Activated T-helper 1 cell treated with anti-CD3 and anti-CD28 coated beads, Interleukin-12 subunit alpha, Interleukin-12 subunit beta, Interleukin-2, Interleukin-4 antibody, amounts not matched to agents 30 ng/mL and 10 ng/mL and 1 ng/mL, durations not matched to agents 14 hours and 24 hours and 36 hours (primary cell): ENCODE measurements at regions of chr1 and their contacts with region 1.

Region 1: DNA sequence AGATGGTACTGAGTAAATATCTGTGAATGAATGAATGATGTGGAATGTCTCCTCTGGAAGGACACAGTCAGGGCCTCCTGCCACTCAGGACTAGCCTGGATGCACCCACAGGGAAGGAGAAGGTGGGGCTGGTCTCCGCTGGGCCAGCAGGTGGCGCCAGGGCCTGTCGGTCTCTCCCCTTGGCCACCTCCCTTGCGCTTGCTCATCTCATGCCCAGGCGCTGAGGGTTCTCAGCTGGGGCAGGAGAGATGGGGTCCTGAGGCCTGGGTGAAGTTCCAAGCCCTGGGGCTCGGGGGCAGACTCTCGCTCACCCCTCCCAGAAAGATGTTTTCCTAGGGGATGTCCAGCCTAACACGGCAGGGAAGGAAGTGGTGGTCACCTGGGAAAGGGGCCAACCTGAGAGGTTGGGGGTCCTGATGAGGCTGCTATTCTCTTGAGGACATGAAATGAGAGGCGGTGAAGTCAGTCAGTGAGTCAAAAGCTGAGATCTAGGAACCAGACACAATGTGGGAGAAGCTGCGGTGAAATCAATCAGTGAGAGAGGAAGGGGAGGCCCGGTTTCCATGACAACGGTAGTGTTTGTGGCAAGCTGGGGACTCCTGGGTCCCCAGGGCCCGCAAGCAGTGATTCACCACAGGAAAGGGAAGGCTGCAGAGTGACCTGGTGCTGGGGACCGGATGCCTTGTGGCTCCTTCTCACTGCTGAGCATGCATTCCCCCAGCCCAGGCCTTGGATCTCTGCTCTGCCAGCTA is 14.6 kb upstream of the MEX3A start:
- DNase-seq: peak; percentile 82
- H3K4me3 Mint-ChIP-seq: peak overlapping the region; percentile 23
- H3K27ac Mint-ChIP-seq: peak overlapping the region; percentile 88
- H3K4me1 Mint-ChIP-seq: peaks cover 43% of the 10 kb centered on the region
- H3K27me3 Mint-ChIP-seq: peaks cover 25% of the 10 kb centered on the region

Region 2: GRCh38 chr1:155809088-155809487 is 287.7 kb before region 1 on chr1:
- intact Hi-C with region 1: no loop called
- DNase-seq: no peak
- H3K4me3 Mint-ChIP-seq: no peak overlapping the region
- H3K27ac Mint-ChIP-seq: no peak overlapping the region
- H3K4me1 Mint-ChIP-seq: no peaks in the 10 kb centered on the region
- H3K27me3 Mint-ChIP-seq: no peaks in the 10 kb centered on the region

Region 3: GRCh38 chr1:156106624-156107488 is 10.0 kb after region 1 on chr1:
- intact Hi-C with region 1: loop called (anchors 1 kb)
- DNase-seq: no peak
- H3K4me3 Mint-ChIP-seq: peak overlapping the region; percentile 75
- H3K27ac Mint-ChIP-seq: peak overlapping the region; percentile 100
- H3K4me1 Mint-ChIP-seq: peaks cover 42% of the 10 kb centered on the region
- H3K27me3 Mint-ChIP-seq: peaks cover 23% of the 10 kb centered on the region

Region 4: DNA sequence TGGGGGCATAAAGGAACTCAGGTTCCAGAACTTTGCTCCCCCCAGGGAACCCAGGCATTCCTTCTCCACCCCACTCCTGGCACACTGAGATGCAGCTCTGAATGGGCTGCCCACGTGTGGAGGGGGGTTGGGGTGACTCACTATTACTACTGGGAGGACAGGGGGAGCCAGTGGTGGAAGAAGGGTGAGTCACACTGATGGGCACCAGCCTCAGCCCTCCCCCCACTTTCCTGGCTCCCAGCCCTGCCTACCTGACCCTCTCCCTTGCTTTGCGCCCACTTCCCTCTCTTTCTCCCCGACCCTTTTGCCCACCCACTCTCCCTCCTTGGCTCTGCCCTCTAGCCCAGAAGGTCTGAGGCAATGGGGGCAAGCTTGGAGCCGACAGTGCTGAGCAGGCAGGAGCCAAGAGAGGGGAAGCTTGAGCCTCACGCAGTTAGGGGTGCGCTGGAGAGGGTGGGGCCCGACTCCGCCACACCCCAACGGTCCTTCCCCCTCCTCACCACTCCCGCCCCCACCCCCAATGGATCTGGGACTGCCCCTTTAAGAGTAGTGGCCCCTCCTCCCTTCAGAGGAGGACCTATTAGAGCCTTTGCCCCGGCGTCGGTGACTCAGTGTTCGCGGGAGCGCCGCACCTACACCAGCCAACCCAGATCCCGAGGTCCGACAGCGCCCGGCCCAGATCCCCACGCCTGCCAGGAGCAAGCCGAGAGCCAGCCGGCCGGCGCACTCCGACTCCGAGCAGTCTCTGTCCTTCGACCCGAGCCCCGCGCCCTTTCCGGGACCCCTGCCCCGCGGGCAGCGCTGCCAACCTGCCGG is 17.5 kb after region 1 on chr1 and contains the start of gene LMNA:
- intact Hi-C with region 1: loop called (anchors 1 kb)
- DNase-seq: peak; percentile 57
- H3K4me3 Mint-ChIP-seq: peak within 1 kb of the TSS; percentile 91
- H3K27ac Mint-ChIP-seq: peak within 1 kb of the TSS; percentile 76
- H3K4me1 Mint-ChIP-seq: peaks cover 25% of the 10 kb centered on the region
- H3K27me3 Mint-ChIP-seq: peaks cover 53% of the 10 kb centered on the region
- total RNA-seq, gene LMNA: 80.1 and 84.1 TPM in 2 replicates